ENCODE measurements at regions of chr3 and their contacts with region 1.

Region 1: DNA sequence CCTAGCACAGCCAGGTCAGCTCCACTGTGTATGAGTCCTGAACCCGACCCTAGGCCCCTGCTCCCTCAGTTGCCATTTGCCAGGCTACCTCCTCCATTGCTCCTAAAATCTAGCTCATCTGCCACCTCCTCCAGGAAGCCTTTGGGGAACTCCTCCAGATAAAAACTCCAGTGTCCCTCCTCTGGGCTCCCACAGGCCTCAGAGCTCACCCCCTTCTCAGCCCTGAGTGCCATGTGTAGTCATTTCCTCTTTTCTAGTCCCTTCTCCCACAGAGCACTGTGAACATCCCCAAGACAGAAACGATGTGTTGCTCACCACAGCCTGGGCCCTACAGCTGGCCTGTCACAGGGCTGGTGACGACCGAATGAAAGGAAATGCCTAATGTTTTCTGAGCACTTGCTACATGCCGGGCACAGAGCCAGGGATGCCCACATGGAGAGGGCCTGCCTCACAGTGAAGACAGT is 61.0 kb downstream of the IQSEC1 start:
- DNase-seq: peak in 2 of 9 donors; percentile 24 to 52
- ATAC-seq: peak; percentile 60
- H3K4me3 ChIP-seq: peak overlapping the region; percentile 38
- H3K4me3 Mint-ChIP-seq: peak overlapping the region; percentile 69 to 96 (median 84)
- H3K27ac ChIP-seq: peak overlapping the region; percentile 99
- H3K27ac Mint-ChIP-seq: peak overlapping the region; percentile 96 to 100 (median 98)
- H3K4me1 ChIP-seq: peaks cover 84 to 90% of the 10 kb centered on the region in 2 donors
- H3K4me1 Mint-ChIP-seq: peaks cover 72 to 92% (median 77%) of the 10 kb centered on the region in 7 donors
- H3K27me3 ChIP-seq: no peaks in the 10 kb centered on the region
- H3K27me3 Mint-ChIP-seq: no peaks in the 10 kb centered on the region

Region 2: GRCh38 chr3:12967606-12968351 is 44.5 kb before region 1 on chr3:
- CTCF ChIA-PET with region 1: no interaction called
- POLR2A ChIA-PET with region 1: interaction called, 4 read pairs
- intact Hi-C with region 1: loop called (anchors 1 kb)
- DNase-seq: peak; percentile 71 to 87 (median 83)
- ATAC-seq: peak; percentile 99
- H3K4me3 ChIP-seq: peak overlapping the region; percentile 47
- H3K4me3 Mint-ChIP-seq: peak overlapping the region; percentile 74 to 87 (median 86)
- H3K27ac ChIP-seq: peak overlapping the region; percentile 29
- H3K27ac Mint-ChIP-seq: peak overlapping the region in 4 of 9 donors; percentile 9 to 84 (median 60)
- H3K4me1 ChIP-seq: peaks cover 47 to 53% of the 10 kb centered on the region in 2 donors
- H3K4me1 Mint-ChIP-seq: peaks cover 50 to 86% (median 77%) of the 10 kb centered on the region in 7 donors
- H3K27me3 ChIP-seq: no peaks in the 10 kb centered on the region
- H3K27me3 Mint-ChIP-seq: peaks cover 0 to 5% (median 0%) of the 10 kb centered on the region in 5 donors

Region 3: DNA sequence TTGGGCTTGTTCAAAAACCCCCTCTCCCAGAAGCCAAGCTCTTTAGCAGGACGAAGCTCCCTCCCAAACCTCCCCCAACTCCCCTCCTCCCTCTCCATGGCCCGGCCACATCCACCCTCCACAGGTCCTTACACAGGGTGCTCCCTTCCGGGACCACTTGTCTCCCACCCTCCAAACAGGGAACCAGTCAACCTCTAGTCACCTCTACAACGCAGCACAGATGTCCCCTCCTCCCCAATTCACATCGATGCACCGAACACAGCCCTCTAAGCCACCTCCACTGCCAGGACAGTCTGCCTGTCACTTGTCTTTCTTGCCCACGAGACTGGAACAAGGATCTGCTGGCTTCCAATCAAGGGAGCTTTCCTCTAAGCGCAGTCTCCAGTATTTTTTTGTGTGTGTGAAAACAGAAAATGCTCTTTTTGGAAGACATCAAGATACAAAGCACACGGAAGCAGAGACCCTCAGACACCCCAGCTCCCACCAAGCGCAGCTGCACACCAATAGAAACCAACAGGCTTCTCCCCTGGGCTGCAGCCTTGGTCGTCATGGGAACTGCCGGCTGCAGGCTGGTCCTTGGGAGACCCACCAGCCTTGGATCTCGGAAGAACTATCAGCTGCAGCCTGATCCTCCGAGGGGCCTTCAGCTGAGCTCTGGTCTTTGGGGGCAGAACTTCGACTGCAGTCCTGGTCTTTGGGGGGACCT is 34.5 kb after region 1 on chr3:
- CTCF ChIA-PET with region 1: interaction called, 6 read pairs
- POLR2A ChIA-PET with region 1: no interaction called
- intact Hi-C with region 1: loop called in 1 of 2 experiments (anchors 1 kb)
- DNase-seq: no peak
- ATAC-seq: peak; percentile 16
- H3K4me3 ChIP-seq: no peak overlapping the region
- H3K4me3 Mint-ChIP-seq: peak overlapping the region in 2 of 10 donors; percentile 32 to 41
- H3K27ac ChIP-seq: no peak overlapping the region
- H3K27ac Mint-ChIP-seq: peak overlapping the region in 7 of 9 donors; percentile 2 to 76 (median 51)
- H3K4me1 ChIP-seq: peaks cover 0 to 8% of the 10 kb centered on the region in 2 donors
- H3K4me1 Mint-ChIP-seq: peaks cover 11 to 22% (median 13%) of the 10 kb centered on the region in 7 donors
- H3K27me3 ChIP-seq: no peaks in the 10 kb centered on the region
- H3K27me3 Mint-ChIP-seq: no peaks in the 10 kb centered on the region

Region 4: DNA sequence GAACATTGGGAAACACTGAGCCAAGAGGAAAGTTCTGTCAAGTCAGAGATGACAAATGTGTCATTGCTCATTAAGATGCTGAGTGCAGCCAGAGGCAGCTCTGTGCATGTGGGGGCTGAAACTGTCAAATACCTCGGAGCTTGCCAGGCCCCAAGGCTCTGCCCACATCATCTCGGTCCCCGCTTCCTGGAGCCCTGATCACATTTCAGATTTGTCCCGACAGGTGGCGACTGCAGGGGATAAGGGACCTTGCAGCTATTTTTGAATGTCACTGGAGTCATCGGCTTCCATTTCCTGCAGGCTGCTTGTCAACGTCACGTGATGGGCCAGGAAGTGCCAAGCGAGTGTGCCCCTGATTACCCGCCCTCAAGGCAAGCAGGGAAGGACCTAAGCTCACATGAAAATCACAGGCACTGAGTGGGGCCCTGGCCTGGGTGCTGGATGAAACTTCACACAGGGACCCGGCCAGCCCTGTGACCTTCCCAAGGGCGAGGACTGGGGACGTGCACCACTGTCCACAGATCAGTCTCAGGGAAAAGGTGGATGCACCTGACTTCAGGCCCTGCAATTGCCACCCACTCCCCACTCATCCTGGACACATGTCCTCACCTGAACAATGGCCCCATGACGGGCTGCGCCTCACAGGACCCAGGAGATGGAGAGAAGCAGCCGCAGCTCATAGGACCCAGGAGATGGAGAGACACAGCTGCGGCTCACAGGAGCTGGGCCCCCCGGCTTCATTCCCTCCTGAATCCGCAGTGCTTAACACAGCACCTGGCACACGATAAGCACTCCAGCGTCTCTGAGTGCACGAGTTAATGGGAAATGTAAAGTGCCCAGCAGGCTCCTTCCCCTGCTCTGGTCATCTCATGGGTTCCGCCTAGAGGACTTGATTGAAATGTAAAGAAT is 334.5 kb after region 1 on chr3:
- CTCF ChIA-PET with region 1: no interaction called
- POLR2A ChIA-PET with region 1: interaction called, 3 read pairs
- intact Hi-C with region 1: loop called in 1 of 2 experiments (anchors 5 kb)
- DNase-seq: peak; percentile 29 to 89 (median 86)
- ATAC-seq: peak; percentile 87
- H3K4me3 ChIP-seq: peak overlapping the region; percentile 33
- H3K4me3 Mint-ChIP-seq: peak overlapping the region; percentile 37 to 84 (median 71)
- H3K27ac ChIP-seq: peak overlapping the region; percentile 68
- H3K27ac Mint-ChIP-seq: peak overlapping the region; percentile 76 to 96 (median 91)
- H3K4me1 ChIP-seq: peaks cover 19 to 44% of the 10 kb centered on the region in 2 donors
- H3K4me1 Mint-ChIP-seq: peaks cover 42 to 64% (median 57%) of the 10 kb centered on the region in 7 donors
- H3K27me3 ChIP-seq: no peaks in the 10 kb centered on the region
- H3K27me3 Mint-ChIP-seq: no peaks in the 10 kb centered on the region

Region 5: GRCh38 chr3:13479581-13480339 is 467.5 kb after region 1 on chr3 and contains the start of gene HDAC11:
- CTCF ChIA-PET with region 1: no interaction called
- POLR2A ChIA-PET with region 1: interaction called, 3 read pairs
- intact Hi-C with region 1: loop called in 1 of 2 experiments (anchors 5 kb)
- DNase-seq: peak; percentile 93 to 98 (median 95)
- ATAC-seq: peak; percentile 98
- H3K4me3 ChIP-seq: peak within 1 kb of the TSS; percentile 97
- H3K4me3 Mint-ChIP-seq: peak within 1 kb of the TSS; percentile 90 to 97 (median 94)
- H3K27ac ChIP-seq: peak within 1 kb of the TSS; percentile 98
- H3K27ac Mint-ChIP-seq: peak within 1 kb of the TSS; percentile 82 to 97 (median 94)
- H3K4me1 ChIP-seq: peaks cover 8 to 15% of the 10 kb centered on the region in 2 donors
- H3K4me1 Mint-ChIP-seq: peaks cover 4 to 22% (median 15%) of the 10 kb centered on the region in 7 donors
- H3K27me3 ChIP-seq: no peaks in the 10 kb centered on the region
- H3K27me3 Mint-ChIP-seq: peaks cover 0 to 13% (median 0%) of the 10 kb centered on the region in 5 donors
- total RNA-seq, gene HDAC11: 1.2 to 8.0 (median 7.3) TPM

Region 6: GRCh38 chr3:14144423-14145075 is 1132.3 kb after region 1 on chr3:
- CTCF ChIA-PET with region 1: no interaction called
- POLR2A ChIA-PET with region 1: no interaction called
- intact Hi-C with region 1: loop called in 1 of 2 experiments (anchors 5 kb)
- DNase-seq: peak; percentile 45 to 93 (median 84)
- ATAC-seq: peak; percentile 75
- H3K4me3 ChIP-seq: peak overlapping the region; percentile 10
- H3K4me3 Mint-ChIP-seq: peak overlapping the region; percentile 53 to 76 (median 66)
- H3K27ac ChIP-seq: peak overlapping the region; percentile 79
- H3K27ac Mint-ChIP-seq: peak overlapping the region; percentile 89 to 100 (median 98)
- H3K4me1 ChIP-seq: peaks cover 50 to 52% of the 10 kb centered on the region in 2 donors
- H3K4me1 Mint-ChIP-seq: peaks cover 34 to 62% (median 56%) of the 10 kb centered on the region in 7 donors
- H3K27me3 ChIP-seq: no peaks in the 10 kb centered on the region
- H3K27me3 Mint-ChIP-seq: no peaks in the 10 kb centered on the region

Region 7: DNA sequence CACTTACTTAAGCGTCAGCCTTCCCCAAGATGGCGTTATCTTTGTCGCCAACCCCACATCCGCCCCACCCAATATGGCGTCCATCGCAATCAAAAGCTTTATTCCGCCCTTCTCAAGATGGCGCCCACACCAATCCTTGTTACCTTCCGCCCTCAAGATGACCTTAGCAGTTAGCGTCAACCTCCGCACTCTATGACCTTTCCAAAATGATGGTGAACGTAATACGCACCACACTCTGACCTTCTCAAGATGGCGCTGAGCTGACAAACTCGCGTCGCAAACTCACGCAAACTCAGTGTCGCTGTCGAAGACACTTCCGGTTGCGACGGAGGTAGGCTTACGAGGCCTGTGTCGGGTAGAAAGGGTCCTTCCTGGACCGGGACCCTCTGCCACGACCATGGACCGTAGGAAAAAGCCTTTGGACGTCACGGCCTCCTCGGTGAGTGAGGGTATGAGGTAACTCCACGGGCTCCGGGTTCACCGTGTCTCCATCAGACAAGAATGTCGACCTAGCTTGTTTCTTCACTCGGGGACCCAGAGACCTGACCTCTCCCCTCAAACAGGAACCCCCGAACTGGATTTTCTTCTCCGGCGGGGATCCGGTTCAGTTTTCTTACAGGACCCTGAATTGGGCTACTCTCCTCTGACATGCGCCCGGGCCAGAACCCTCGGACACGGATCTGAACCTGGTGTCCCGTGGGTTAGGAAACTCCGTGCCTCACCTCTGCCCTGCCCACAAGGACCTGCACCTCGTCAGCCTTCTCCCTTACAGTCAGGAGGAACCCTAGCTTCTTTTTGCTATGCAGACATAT is 1639.4 kb after region 1 on chr3 and contains the start of gene CCDC174:
- CTCF ChIA-PET with region 1: no interaction called
- POLR2A ChIA-PET with region 1: no interaction called
- intact Hi-C with region 1: loop called in 1 of 2 experiments (anchors 2 kb)
- DNase-seq: peak; percentile 84 to 98 (median 96)
- ATAC-seq: peak; percentile 99
- H3K4me3 ChIP-seq: peak within 1 kb of the TSS; percentile 90
- H3K4me3 Mint-ChIP-seq: peak within 1 kb of the TSS; percentile 84 to 100 (median 96)
- H3K27ac ChIP-seq: peak within 1 kb of the TSS; percentile 94
- H3K27ac Mint-ChIP-seq: peak within 1 kb of the TSS; percentile 92 to 100 (median 98)
- H3K4me1 ChIP-seq: peaks cover 21 to 25% of the 10 kb centered on the region in 2 donors
- H3K4me1 Mint-ChIP-seq: peaks cover 25 to 80% (median 66%) of the 10 kb centered on the region in 7 donors
- H3K27me3 ChIP-seq: no peaks in the 10 kb centered on the region
- H3K27me3 Mint-ChIP-seq: peaks cover 0 to 2% (median 0%) of the 10 kb centered on the region in 5 donors
- total RNA-seq, gene CCDC174: 21.6 to 59.2 (median 46.2) TPM